ENCODE measurements at regions of chr2 and their contacts with region 1.

Region 1: GRCh38 chr2:48946449-48947048 is 191.0 kb upstream of the LHCGR start:
- DNase-seq: peak; percentile 67
- H3K4me3 ChIP-seq: no peak overlapping the region
- H3K27ac ChIP-seq: no peak overlapping the region
- H3K4me1 ChIP-seq: peaks cover 6% of the 10 kb centered on the region
- H3K27me3 ChIP-seq: no peaks in the 10 kb centered on the region
- CTCF ChIP-seq: peak; percentile 86

Region 2: GRCh38 chr2:48624696-48625095 is 321.9 kb before region 1 on chr2:
- CTCF ChIA-PET with region 1: no interaction called
- POLR2A ChIA-PET with region 1: no interaction called
- intact Hi-C with region 1: loop called (anchors 10 kb)
- DNase-seq: no peak
- H3K4me3 ChIP-seq: no peak overlapping the region
- H3K27ac ChIP-seq: no peak overlapping the region
- H3K4me1 ChIP-seq: no peaks in the 10 kb centered on the region
- H3K27me3 ChIP-seq: no peaks in the 10 kb centered on the region
- CTCF ChIP-seq: no peak

Region 3: GRCh38 chr2:49042510-49042909 is 96.0 kb after region 1 on chr2:
- CTCF ChIA-PET with region 1: no interaction called
- POLR2A ChIA-PET with region 1: no interaction called
- intact Hi-C with region 1: no loop called
- DNase-seq: no peak
- H3K4me3 ChIP-seq: no peak overlapping the region
- H3K27ac ChIP-seq: no peak overlapping the region
- H3K4me1 ChIP-seq: no peaks in the 10 kb centered on the region
- H3K27me3 ChIP-seq: peaks cover 3% of the 10 kb centered on the region
- CTCF ChIP-seq: no peak

Region 4: GRCh38 chr2:49332415-49332814 is 385.9 kb after region 1 on chr2:
- CTCF ChIA-PET with region 1: no interaction called
- POLR2A ChIA-PET with region 1: no interaction called
- intact Hi-C with region 1: loop called (anchors 5 kb)
- DNase-seq: no peak
- H3K4me3 ChIP-seq: no peak overlapping the region
- H3K27ac ChIP-seq: no peak overlapping the region
- H3K4me1 ChIP-seq: no peaks in the 10 kb centered on the region
- H3K27me3 ChIP-seq: no peaks in the 10 kb centered on the region
- CTCF ChIP-seq: 0 out of 2 replicates have a peak, but pooled peaks have one; percentile 9

Region 5: DNA sequence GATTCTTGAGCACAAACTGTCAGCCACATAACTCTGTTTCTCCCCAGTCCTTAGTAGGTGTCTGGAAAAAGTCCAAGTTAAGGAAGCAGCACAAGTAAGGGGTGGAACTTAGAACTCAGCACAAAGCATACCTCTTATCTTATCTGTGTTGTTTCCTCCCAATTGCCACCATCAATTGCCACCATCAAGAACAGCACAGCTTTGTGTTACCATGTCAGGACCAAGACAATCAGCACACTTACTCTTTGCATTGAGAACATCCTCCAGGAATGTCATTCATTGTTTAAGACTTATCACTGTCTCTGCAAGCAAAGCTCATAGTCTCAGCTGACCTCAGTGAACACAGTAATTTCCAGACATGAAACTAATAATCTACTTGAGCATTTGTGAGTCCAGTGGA is 420.5 kb after region 1 on chr2:
- CTCF ChIA-PET with region 1: no interaction called
- POLR2A ChIA-PET with region 1: no interaction called
- intact Hi-C with region 1: no loop called
- DNase-seq: no peak
- H3K4me3 ChIP-seq: no peak overlapping the region
- H3K27ac ChIP-seq: no peak overlapping the region
- H3K4me1 ChIP-seq: no peaks in the 10 kb centered on the region
- H3K27me3 ChIP-seq: no peaks in the 10 kb centered on the region
- CTCF ChIP-seq: no peak

Region 6: GRCh38 chr2:49490710-49491109 is 544.2 kb after region 1 on chr2:
- CTCF ChIA-PET with region 1: no interaction called
- POLR2A ChIA-PET with region 1: no interaction called
- intact Hi-C with region 1: loop called (anchors 10 kb)
- DNase-seq: peak; percentile 22
- H3K4me3 ChIP-seq: no peak overlapping the region
- H3K27ac ChIP-seq: no peak overlapping the region
- H3K4me1 ChIP-seq: no peaks in the 10 kb centered on the region
- H3K27me3 ChIP-seq: no peaks in the 10 kb centered on the region
- CTCF ChIP-seq: peak; percentile 45; the same call in 1 of the 2 replicates

Region 7: DNA sequence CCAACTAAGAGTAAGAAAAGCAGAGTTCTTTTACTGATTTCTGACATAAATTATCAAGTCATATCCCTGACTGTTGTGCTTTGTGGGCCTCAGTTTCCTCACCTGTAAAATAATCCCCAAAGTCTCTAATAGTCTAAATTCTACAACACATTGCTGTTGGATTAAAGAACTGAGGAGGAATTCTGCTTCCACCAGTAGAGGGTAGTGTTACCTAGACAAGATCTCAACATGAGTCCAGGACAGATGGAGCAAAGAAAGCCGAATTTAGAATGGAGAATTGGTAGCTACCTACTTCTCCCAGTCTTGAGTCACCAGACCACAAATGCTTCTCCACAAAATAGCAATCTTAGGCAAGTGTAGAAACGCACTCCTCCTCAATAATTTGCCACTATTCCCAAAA is 670.3 kb after region 1 on chr2:
- CTCF ChIA-PET with region 1: no interaction called
- POLR2A ChIA-PET with region 1: no interaction called
- intact Hi-C with region 1: loop called (anchors 5 kb)
- DNase-seq: peak; percentile 52
- H3K4me3 ChIP-seq: no peak overlapping the region
- H3K27ac ChIP-seq: no peak overlapping the region
- H3K4me1 ChIP-seq: no peaks in the 10 kb centered on the region
- H3K27me3 ChIP-seq: no peaks in the 10 kb centered on the region
- CTCF ChIP-seq: peak; percentile 62

Region 8: DNA sequence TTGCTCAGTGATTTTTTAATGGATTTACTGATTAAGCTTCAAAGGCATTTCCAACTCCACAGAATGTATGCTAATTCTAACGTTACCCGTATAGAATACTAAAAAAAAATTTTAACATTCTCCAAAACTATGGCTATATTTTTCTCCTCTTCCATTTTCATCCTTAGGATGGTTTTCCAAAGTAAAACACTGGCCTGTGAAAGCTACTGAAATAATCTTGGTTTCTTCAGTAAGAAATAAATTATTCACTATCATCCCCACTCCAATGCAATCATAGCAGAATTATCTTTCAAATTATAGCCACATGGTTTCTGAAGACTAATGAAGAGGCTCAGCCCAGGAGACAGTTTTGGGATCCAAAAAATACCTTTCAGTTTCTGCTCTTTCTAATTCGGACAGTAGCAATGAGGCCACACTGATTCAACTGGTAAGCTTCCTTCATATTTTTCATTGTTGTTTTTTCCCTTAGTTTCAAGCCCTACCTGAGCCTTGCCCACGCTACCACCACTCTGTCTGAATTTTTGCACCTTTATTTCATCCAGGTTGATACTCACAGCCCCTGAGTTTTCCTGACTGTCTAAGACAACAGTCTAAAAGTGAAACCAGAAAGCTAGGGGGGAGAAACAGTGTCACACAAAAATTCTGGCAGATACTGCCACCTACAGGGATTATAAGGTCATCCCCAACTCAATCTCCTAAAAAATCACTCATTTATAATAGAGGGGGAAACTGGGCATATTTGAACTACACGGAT is 1197.5 kb after region 1 on chr2:
- CTCF ChIA-PET with region 1: interaction called, 3 read pairs
- POLR2A ChIA-PET with region 1: no interaction called
- intact Hi-C with region 1: loop called (anchors 5 kb)
- DNase-seq: peak; percentile 68
- H3K4me3 ChIP-seq: peak overlapping the region; percentile 38
- H3K27ac ChIP-seq: no peak overlapping the region
- H3K4me1 ChIP-seq: no peaks in the 10 kb centered on the region
- H3K27me3 ChIP-seq: no peaks in the 10 kb centered on the region
- CTCF ChIP-seq: peak; percentile 78

Region 9: GRCh38 chr2:50492477-50492851 is 1545.9 kb after region 1 on chr2:
- CTCF ChIA-PET with region 1: no interaction called
- POLR2A ChIA-PET with region 1: no interaction called
- intact Hi-C with region 1: loop called (anchors 5 kb)
- DNase-seq: peak; percentile 71
- H3K4me3 ChIP-seq: no peak overlapping the region
- H3K27ac ChIP-seq: no peak overlapping the region
- H3K4me1 ChIP-seq: no peaks in the 10 kb centered on the region
- H3K27me3 ChIP-seq: peaks cover 18% of the 10 kb centered on the region
- CTCF ChIP-seq: peak; percentile 66